GM12878 (cell line): ENCODE measurements at regions of chr2 and their contacts with region 1.

Region 1: DNA sequence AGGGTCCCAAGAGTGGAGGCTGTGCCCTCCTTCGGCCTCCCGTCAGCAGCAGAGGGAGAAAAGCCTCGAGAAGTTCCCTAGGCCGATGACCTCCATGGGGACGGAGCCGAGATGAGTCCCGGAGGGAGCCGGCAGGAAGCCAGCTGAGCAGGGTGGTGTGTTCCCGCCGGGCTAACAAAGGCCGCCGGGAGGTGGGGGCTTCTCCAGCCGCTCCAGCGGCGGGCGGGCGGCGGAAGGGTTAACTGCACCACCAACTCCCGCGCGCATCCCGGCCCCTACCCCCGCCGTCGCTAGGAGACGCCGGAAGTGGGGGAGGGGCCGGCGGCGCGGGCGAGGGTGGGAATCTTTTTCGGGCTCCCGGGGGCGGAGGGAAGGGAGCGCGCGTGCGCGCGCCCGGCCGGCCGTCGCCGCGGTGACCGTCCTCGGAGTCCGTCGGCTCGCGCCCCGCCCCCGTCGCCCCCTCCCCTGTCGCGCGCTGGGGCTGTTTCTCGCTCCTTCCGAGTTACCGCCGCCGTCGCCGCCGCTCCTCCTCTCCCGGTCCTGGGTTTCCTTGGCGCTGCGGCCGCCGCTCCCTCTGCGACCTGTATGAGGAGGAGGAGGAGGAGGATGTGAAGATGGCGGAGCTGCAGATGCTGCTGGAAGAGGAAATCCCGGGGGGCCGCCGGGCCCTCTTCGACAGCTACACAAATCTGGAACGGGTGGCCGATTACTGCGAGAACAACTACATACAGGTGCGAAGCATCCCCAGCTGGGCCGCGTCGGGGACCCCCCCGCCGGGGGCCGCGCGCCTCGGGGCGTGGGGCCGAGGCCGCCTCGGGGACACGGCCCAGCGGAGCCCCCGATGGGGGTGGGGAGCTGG is at the start of gene ABI2:
- DNase-seq: no peak
- ATAC-seq: peak; percentile 80
- H3K4me3 ChIP-seq: peak within 1 kb of the TSS; percentile 81
- H3K27ac ChIP-seq: peak within 1 kb of the TSS; percentile 45
- H3K4me1 ChIP-seq: no peaks in the 10 kb centered on the region
- H3K27me3 ChIP-seq: no peaks in the 10 kb centered on the region
- CTCF ChIP-seq: no peak
- EP300 ChIP-seq: no peak
- POLR2A ChIP-seq: peak; percentile 50
- RAD21 ChIP-seq: no peak
- polyA plus RNA-seq, gene ABI2: 8.9 to 14.2 TPM

Region 2: DNA sequence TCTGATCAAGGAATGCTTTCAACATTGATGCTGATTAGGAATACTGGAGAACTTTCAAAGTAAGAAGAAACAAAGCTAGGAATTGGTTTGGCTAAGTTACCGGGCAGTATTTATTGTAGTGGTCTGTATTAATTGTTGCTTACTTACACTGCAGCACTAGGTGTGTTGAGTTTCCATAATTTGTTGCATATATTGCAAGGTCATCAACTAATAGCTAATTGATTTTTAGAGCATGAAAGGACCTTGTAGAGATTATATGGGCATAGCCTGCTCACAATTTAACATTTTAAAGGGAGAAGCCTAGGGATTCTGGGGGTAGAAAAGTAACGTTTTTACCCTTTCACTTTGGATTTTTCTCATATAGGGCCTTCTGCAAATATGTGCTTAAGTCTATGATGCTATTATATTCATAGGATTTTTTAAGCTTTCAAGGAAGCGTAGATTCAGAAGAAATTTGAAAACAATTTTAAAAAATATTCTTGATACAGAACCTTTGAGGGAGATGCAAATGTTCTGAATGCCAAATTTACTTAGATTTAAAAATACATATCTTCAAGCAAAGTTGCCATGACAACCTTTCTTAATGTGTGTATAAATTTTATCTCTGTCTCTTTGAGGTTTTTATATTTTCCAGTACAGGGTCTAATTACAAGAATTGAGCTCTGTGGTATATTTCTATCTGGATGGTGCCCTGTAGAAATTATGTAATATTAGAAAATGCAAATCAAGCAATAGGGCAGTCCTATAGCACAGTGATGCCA is 17.3 kb before region 1 on chr2:
- CTCF ChIA-PET with region 1: interaction called, 3 read pairs
- POLR2A ChIA-PET with region 1: interaction called, 6 read pairs
- RAD21 ChIA-PET with region 1: no interaction called
- SMC1A ChIA-PET with region 1: interaction called, 5 read pairs
- in situ Hi-C with region 1: no loop called
- intact Hi-C with region 1: loop called (anchors 1 kb)
- DNase-seq: no peak
- ATAC-seq: no peak
- H3K4me3 ChIP-seq: no peak overlapping the region
- H3K27ac ChIP-seq: no peak overlapping the region
- H3K4me1 ChIP-seq: no peaks in the 10 kb centered on the region
- H3K27me3 ChIP-seq: no peaks in the 10 kb centered on the region
- CTCF ChIP-seq: no peak
- EP300 ChIP-seq: no peak
- POLR2A ChIP-seq: no peak
- RAD21 ChIP-seq: no peak